IMR-90 (cell line): ENCODE measurements at regions of chr14 and their contacts with region 1.

Region 1: GRCh38 chr14:50299585-50299984 is 12.4 kb downstream of the L2HGDH start:
- DNase-seq: no peak
- ATAC-seq: no peak
- H3K4me3 ChIP-seq: no peak overlapping the region
- H3K27ac ChIP-seq: no peak overlapping the region
- H3K4me1 ChIP-seq: no peaks in the 10 kb centered on the region
- H3K27me3 ChIP-seq: no peaks in the 10 kb centered on the region
- CTCF ChIP-seq: no peak
- POLR2A ChIP-seq: no peak
- RAD21 ChIP-seq: no peak

Region 2: GRCh38 chr14:50260511-50260910 is 39.1 kb before region 1 on chr14:
- CTCF ChIA-PET with region 1: no interaction called
- POLR2A ChIA-PET with region 1: no interaction called
- dilution Hi-C with region 1: no loop called
- in situ Hi-C with region 1: no loop called
- intact Hi-C with region 1: loop called (anchors 5 kb)
- DNase-seq: peak; percentile 52
- ATAC-seq: peak; percentile 91
- H3K4me3 ChIP-seq: no peak overlapping the region
- H3K27ac ChIP-seq: no peak overlapping the region
- H3K4me1 ChIP-seq: no peaks in the 10 kb centered on the region
- H3K27me3 ChIP-seq: no peaks in the 10 kb centered on the region
- CTCF ChIP-seq: peak; percentile 57
- POLR2A ChIP-seq: no peak
- RAD21 ChIP-seq: peak; percentile 58

Region 3: GRCh38 chr14:50425816-50426215 is 126.2 kb after region 1 on chr14:
- CTCF ChIA-PET with region 1: no interaction called
- POLR2A ChIA-PET with region 1: no interaction called
- dilution Hi-C with region 1: no loop called
- in situ Hi-C with region 1: no loop called
- intact Hi-C with region 1: no loop called
- DNase-seq: peak; percentile 69
- ATAC-seq: peak; percentile 49
- H3K4me3 ChIP-seq: no peak overlapping the region
- H3K27ac ChIP-seq: no peak overlapping the region
- H3K4me1 ChIP-seq: no peaks in the 10 kb centered on the region
- H3K27me3 ChIP-seq: no peaks in the 10 kb centered on the region
- CTCF ChIP-seq: no peak
- POLR2A ChIP-seq: no peak
- RAD21 ChIP-seq: no peak